WTC11 (cell line): ENCODE measurements at regions of chr16 and their contacts with region 1.

Region 1: DNA sequence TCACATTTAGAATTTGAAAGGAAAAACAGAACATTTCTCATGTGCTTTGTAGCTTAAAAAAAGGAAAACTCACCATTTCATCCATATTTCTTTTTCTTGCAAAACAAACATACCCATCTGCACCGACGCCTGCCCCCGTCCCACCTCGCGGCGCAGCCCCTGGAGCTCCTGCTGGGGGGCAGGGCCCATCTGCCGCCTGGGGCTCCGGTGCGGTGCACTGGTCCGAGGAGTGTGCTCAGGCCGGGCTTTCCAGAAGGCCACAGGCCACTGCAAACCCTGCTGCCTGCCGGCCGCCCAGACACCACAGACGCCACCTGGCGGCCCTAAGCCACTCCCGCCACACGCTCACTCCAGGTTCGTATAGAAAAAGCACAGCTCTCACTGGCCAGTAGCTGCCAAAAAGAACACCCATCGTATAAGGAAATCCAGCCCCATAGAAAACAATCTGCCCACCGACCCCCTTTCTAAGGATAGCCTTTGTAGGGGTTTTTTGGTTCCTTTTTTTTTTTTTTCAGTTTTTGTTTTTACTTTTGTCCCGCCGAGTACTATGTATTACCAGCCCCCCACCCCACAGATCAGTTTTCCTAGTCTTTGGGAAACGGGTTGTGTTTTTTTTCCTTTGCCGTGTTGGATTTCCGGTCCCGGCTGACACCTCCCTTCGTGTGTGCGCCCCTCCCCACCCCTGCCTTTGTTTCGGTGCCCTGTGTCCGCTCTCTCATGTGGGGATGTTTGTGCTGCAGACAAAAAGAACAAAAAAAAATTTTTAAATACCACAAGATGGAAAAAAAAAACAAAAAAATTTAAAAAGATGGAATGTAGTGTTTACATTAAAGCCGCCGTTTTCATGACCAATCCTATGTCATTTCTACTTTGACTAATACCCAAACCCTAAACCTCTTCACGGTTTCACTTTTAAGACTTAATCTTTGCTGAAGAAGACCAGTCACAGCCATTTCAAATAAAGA is 68.8 kb downstream of the AMFR start:
- DNase-seq: peak; percentile 87
- ATAC-seq: peak; percentile 93
- H3K4me3 Mint-ChIP-seq: peak overlapping the region; percentile 59
- H3K27ac Mint-ChIP-seq: peak overlapping the region; percentile 94
- H3K4me1 Mint-ChIP-seq: peaks cover 35% of the 10 kb centered on the region
- H3K27me3 Mint-ChIP-seq: no peaks in the 10 kb centered on the region
- CTCF ChIP-seq: peak; percentile 54

Region 2: GRCh38 chr16:56163938-56164337 is 192.6 kb before region 1 on chr16:
- CTCF ChIA-PET with region 1: no interaction called
- POLR2A ChIA-PET with region 1: no interaction called
- DNase-seq: no peak
- ATAC-seq: no peak
- H3K4me3 Mint-ChIP-seq: no peak overlapping the region
- H3K27ac Mint-ChIP-seq: no peak overlapping the region
- H3K4me1 Mint-ChIP-seq: no peaks in the 10 kb centered on the region
- H3K27me3 Mint-ChIP-seq: no peaks in the 10 kb centered on the region
- CTCF ChIP-seq: no peak

Region 3: DNA sequence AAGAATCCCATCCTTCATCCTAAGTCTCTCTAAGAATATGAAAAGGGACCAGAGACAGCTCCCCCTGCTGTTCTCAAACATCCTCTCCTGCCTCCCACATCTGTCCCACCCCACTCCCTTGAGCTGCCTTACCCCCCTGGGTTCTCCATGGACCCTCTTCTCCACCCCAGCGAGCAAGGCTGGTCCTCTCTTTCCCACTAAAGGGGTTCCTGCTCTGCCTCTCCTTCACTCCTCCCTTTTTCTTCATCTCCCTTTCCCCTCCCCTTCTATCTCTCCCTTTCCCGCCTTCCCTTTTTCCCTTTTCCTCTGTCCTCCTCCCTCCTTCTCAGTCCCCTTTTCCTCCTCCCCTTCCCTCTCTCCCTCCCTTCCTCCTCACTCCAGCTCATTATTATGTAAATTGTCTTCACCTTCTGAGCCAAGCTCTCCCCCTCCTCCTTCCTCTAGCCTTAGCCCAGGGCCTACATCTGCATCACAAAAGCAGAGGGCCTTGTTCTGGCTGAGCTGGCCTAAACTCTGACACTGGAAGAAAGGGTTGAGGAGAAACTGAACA is 75.2 kb before region 1 on chr16:
- CTCF ChIA-PET with region 1: interaction called, 28 read pairs
- POLR2A ChIA-PET with region 1: interaction called, 3 read pairs
- DNase-seq: peak; percentile 73
- ATAC-seq: peak; percentile 93
- H3K4me3 Mint-ChIP-seq: peak overlapping the region; percentile 54; the same call in 1 of the 2 replicates
- H3K27ac Mint-ChIP-seq: peak overlapping the region; percentile 57
- H3K4me1 Mint-ChIP-seq: peaks cover 93% of the 10 kb centered on the region
- H3K27me3 Mint-ChIP-seq: no peaks in the 10 kb centered on the region
- CTCF ChIP-seq: no peak

Region 4: DNA sequence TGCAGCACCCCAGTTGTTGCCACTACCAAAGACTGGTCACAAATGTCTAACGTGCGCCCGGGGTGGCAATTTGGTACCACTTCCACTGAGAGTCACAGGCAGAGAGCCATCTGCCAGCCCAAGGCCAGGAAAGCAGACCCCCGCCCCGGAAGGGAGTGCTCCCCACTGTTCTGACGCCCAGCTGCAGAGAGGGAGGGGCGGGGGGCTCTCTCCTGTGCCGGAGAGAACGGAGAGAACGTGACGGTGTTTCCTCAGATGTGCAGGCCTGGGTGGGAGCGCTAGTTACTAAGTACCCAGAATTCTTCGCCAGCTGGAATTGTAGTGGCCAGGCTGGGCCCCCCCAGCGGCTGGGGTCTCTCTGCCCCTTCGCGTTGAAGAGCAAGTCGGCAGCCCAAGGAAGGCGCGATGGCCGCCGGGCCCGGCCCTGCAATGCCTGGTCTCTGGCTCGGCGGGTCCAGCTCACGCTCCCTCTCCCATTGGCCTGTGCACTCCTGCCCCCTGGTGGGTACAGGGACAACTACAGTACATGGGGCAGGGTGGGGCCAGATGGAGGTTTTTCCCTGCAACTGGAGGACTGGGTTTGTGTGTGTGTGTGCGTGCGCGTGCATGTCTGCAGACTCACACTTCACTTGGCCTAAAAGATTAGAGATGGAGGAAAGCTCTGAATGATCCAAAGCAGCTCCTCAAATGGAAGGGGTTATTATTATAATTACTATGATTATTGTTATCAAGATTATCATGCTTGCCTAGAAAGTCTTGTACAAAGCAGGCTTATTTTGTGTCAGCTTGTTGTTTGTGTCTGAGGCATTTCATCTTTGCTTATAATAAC is 38.3 kb before region 1 on chr16:
- CTCF ChIA-PET with region 1: interaction called, 15 read pairs
- POLR2A ChIA-PET with region 1: no interaction called
- DNase-seq: peak; percentile 88
- ATAC-seq: peak; percentile 98
- H3K4me3 Mint-ChIP-seq: peak overlapping the region; percentile 64
- H3K27ac Mint-ChIP-seq: no peak overlapping the region
- H3K4me1 Mint-ChIP-seq: peaks cover 5% of the 10 kb centered on the region
- H3K27me3 Mint-ChIP-seq: peaks cover 9% of the 10 kb centered on the region
- CTCF ChIP-seq: peak; percentile 96

Region 5: GRCh38 chr16:56332464-56333079 is 24.0 kb before region 1 on chr16:
- CTCF ChIA-PET with region 1: interaction called, 65 read pairs
- POLR2A ChIA-PET with region 1: no interaction called
- DNase-seq: peak; percentile 71
- ATAC-seq: peak; percentile 88
- H3K4me3 Mint-ChIP-seq: no peak overlapping the region
- H3K27ac Mint-ChIP-seq: no peak overlapping the region
- H3K4me1 Mint-ChIP-seq: no peaks in the 10 kb centered on the region
- H3K27me3 Mint-ChIP-seq: no peaks in the 10 kb centered on the region
- CTCF ChIP-seq: no peak

Region 6: GRCh38 chr16:56370877-56371659 is 14.5 kb after region 1 on chr16:
- CTCF ChIA-PET with region 1: interaction called, 17 read pairs
- POLR2A ChIA-PET with region 1: no interaction called
- DNase-seq: no peak
- ATAC-seq: no peak
- H3K4me3 Mint-ChIP-seq: no peak overlapping the region
- H3K27ac Mint-ChIP-seq: no peak overlapping the region
- H3K4me1 Mint-ChIP-seq: peaks cover 9% of the 10 kb centered on the region; the same call in 1 of the 2 replicates
- H3K27me3 Mint-ChIP-seq: no peaks in the 10 kb centered on the region
- CTCF ChIP-seq: no peak

Region 7: DNA sequence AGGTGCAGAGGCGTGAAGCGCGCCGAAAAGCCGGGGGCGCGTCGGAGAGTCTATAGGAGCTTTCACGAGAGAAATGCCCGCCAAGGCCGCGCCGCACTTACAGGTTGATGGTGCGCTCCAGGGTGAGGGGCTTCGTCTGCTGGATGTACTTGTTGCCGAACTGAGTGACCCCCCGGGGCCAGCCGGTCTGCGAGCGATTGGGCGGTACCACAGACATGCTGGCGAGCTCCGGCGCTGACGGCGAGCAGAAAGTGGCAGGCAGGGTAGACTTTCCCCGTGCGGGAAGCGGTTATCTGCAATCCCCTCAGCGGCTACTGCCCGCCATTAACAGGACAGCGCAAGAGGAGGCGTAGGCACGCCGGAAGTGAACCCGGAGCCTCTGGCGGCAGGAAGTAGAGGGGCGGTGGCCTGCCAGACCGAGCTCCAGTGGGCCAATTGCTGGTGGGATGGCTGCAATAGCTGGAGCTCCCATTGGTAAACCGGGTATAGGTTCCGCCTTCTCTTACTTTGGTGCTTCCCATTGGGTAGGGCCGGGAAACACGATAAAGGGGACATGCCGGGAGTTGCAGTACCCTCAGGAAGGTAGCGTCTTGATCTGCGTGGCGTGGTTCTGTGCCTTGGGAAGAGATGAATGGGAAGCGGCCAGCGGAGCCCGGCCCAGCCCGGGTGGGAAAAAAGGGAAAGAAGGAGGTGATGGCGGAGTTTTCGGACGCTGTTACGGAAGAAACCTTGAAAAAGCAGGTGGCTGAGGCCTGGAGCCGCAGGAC is 94.6 kb after region 1 on chr16 and contains the starts of genes NUDT21 and OGFOD1:
- CTCF ChIA-PET with region 1: interaction called, 13 read pairs
- POLR2A ChIA-PET with region 1: interaction called, 3 read pairs
- DNase-seq: peak; percentile 92
- ATAC-seq: peak; percentile 99
- H3K4me3 Mint-ChIP-seq: peak within 1 kb of the TSS; percentile 97
- H3K27ac Mint-ChIP-seq: peak within 1 kb of the TSS; percentile 95
- H3K4me1 Mint-ChIP-seq: peaks cover 20% of the 10 kb centered on the region
- H3K27me3 Mint-ChIP-seq: no peaks in the 10 kb centered on the region
- CTCF ChIP-seq: no peak
- total RNA-seq, gene NUDT21: 247 to 263 TPM (median 259 TPM) in 3 replicates
- total RNA-seq, gene OGFOD1: 50.5 to 52.2 TPM (median 50.7 TPM) in 3 replicates